AG04449 (cell line): ENCODE measurements at regions of chr7 and their contacts with region 1.

Region 1: GRCh38 chr7:76314042-76314721 is 11.7 kb downstream of the HSPB1 start:
- DNase-seq: peak; percentile 67
- H3K4me3 ChIP-seq: no peak overlapping the region
- CTCF ChIP-seq: peak; percentile 100

Region 2: GRCh38 chr7:76166404-76167255 is 147.6 kb before region 1 on chr7:
- CTCF ChIA-PET with region 1: interaction called, 345 read pairs
- POLR2A ChIA-PET with region 1: no interaction called
- DNase-seq: peak; percentile 37
- H3K4me3 ChIP-seq: peak overlapping the region; percentile 78
- CTCF ChIP-seq: peak; percentile 0

Region 3: DNA sequence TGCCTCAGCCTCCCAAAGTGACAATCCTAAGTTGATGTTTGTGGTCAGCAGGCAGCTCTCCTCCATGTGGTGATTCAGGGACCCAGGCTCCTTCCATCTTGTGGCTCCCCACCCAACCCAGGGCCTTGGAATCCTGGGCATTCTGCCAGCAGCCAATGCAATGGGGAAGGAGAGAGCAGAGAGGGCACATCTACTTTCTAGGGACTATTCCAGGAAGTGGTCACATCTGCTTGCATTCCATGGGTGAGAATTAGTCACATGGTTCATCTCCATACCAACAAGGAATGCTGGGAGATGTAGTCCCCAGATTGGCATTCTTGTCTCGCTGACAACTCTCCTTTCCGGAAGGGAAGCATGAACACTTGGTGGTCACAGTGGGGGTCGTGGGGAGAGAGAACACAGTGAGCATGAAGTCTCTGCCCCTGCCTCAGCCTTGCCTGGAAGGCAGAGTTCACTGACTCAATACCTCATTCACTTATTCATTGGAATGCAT is 122.4 kb before region 1 on chr7:
- CTCF ChIA-PET with region 1: interaction called, 93 read pairs
- POLR2A ChIA-PET with region 1: interaction called, 3 read pairs
- DNase-seq: no peak
- H3K4me3 ChIP-seq: no peak overlapping the region
- CTCF ChIP-seq: no peak

Region 4: GRCh38 chr7:76272851-76273497 is 41.2 kb before region 1 on chr7:
- CTCF ChIA-PET with region 1: interaction called, 10 read pairs
- POLR2A ChIA-PET with region 1: no interaction called
- DNase-seq: no peak
- H3K4me3 ChIP-seq: no peak overlapping the region
- CTCF ChIP-seq: no peak

Region 5: GRCh38 chr7:76302347-76303201 is 11.6 kb before region 1 on chr7 and contains the start of gene HSPB1:
- CTCF ChIA-PET with region 1: interaction called, 164 read pairs
- POLR2A ChIA-PET with region 1: interaction called, 11 read pairs
- DNase-seq: no peak
- H3K4me3 ChIP-seq: peak within 1 kb of the TSS; percentile 97
- CTCF ChIP-seq: no peak